Activated B cell treated with CpG ODN at 0.5 μM for 24 hours (primary cell): ENCODE measurements at regions of chr3 and their contacts with region 1.

Region 1: GRCh38 chr3:71201939-71202338 is 381.6 kb downstream of the FOXP1 start:
- DNase-seq: no peak
- ATAC-seq: no peak
- H3K4me3 Mint-ChIP-seq: no peak overlapping the region
- H3K27ac Mint-ChIP-seq: peak overlapping the region; percentile 14
- H3K4me1 Mint-ChIP-seq: peaks cover 45% of the 10 kb centered on the region
- H3K27me3 Mint-ChIP-seq: no peaks in the 10 kb centered on the region
- CTCF ChIP-seq: no peak

Region 2: DNA sequence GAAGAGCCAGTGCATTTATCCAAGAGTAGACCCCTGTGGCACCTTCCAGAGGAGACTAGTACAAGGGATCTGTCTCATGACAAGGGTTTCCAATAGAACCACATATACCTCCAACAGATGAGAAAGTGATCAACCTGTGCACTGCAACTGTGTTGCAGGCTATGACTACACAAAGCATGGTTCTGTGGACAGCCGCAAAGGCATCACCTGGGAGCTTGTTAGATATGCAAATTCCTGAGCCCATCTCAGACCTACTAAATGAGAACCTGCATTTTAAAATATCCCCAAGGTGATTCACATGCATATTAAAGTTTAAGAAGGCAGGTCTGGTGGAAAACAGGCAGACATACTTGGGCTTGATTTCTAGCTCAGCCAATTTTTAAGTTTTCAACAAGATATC is 12.9 kb after region 1 on chr3:
- CTCF ChIA-PET with region 1: no interaction called
- POLR2A ChIA-PET with region 1: interaction called, 6 read pairs
- intact Hi-C with region 1: loop called (anchors 2 kb)
- DNase-seq: no peak
- ATAC-seq: peak; percentile 70
- H3K4me3 Mint-ChIP-seq: no peak overlapping the region
- H3K27ac Mint-ChIP-seq: peak overlapping the region; percentile 15
- H3K4me1 Mint-ChIP-seq: peaks cover 74% of the 10 kb centered on the region
- H3K27me3 Mint-ChIP-seq: no peaks in the 10 kb centered on the region
- CTCF ChIP-seq: no peak